Endothelial cell of umbilical vein (primary cell): ENCODE measurements at regions of chr5 and their contacts with region 1.

Region 1: DNA sequence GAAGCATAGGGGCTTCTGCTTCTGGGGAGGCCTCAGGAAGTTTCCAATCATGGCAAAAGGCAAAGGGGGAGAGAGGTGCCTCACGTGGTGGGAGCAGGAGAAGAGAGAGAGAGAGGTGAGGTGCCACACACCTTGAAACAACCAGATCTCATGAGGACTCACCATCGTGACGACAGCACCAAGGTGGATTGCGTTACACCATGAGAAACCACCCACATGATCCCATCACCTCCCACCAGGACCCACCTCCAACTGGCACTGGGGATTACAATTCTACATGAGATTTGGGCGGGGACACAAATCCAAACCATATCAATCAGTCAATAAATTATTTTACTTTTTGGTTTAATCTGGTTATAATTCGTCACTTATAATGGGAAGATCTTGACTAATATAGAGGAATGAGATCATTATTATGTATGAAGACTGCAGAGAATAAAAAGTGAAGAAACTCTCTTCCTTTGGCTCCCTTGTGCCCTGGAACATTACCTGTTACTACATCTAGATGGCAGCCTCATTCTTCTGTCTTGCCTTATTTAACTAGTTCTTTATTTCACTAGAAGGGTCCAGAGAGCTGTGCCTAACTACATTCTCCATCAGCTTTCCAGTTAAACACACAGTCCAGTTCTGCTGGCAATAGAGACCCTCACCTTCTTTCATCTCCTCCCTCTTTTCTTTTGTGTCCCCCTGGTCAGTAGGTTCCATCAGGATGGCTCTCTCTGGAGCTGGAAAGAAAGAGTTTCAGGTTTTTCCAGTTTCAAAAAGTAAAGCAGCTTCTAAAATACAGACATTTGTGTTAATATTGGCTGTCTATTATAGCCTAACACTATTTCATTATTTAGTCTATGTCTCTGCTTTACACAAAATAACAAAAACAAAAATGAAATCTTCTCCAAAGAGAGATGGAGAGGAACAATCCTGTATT is 21.7 kb upstream of the SPINK7 start:
- DNase-seq: peak; percentile 36
- H3K4me3 ChIP-seq: no peak overlapping the region
- H3K27ac ChIP-seq: no peak overlapping the region
- H3K4me1 ChIP-seq: no peaks in the 10 kb centered on the region
- H3K27me3 ChIP-seq: no peaks in the 10 kb centered on the region
- CTCF ChIP-seq: peak; percentile 24 to 42
- POLR2A ChIP-seq: no peak

Region 2: GRCh38 chr5:148237785-148238184 is 52.7 kb before region 1 on chr5:
- CTCF ChIA-PET with region 1: no interaction called
- POLR2A ChIA-PET with region 1: no interaction called
- dilution Hi-C with region 1: no loop called
- intact Hi-C with region 1: no loop called
- DNase-seq: no peak
- H3K4me3 ChIP-seq: no peak overlapping the region
- H3K27ac ChIP-seq: no peak overlapping the region
- H3K4me1 ChIP-seq: no peaks in the 10 kb centered on the region
- H3K27me3 ChIP-seq: no peaks in the 10 kb centered on the region
- CTCF ChIP-seq: no peak
- POLR2A ChIP-seq: no peak

Region 3: DNA sequence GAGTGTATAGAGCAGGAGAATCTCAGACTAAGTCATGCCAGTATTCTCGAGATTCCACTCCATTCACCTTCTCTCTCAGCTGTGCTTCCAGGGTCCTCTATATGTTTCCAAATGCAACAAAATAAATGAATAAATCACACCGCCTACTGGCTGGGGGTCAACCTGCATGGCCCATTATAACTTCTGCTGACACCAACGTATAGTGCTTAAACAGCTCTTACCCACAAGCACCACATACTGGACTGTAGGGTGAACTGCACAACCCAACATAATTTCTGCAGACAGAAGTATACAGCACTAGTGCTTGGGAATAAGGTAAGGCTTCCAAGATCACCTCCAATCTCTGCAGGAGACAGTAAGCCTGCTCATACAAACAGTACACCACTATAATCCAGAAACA is 396.9 kb after region 1 on chr5:
- CTCF ChIA-PET with region 1: interaction called, 3 read pairs
- POLR2A ChIA-PET with region 1: no interaction called
- dilution Hi-C with region 1: no loop called
- intact Hi-C with region 1: loop called (anchors 10 kb)
- DNase-seq: peak; percentile 58
- H3K4me3 ChIP-seq: no peak overlapping the region
- H3K27ac ChIP-seq: no peak overlapping the region
- H3K4me1 ChIP-seq: no peaks in the 10 kb centered on the region
- H3K27me3 ChIP-seq: peaks cover 0 to 4% of the 10 kb centered on the region in 2 experiments
- CTCF ChIP-seq: peak; percentile 52 to 66
- POLR2A ChIP-seq: no peak